Body of pancreas (tissue), 4 donors: ENCODE measurements at regions of chr12 and their contacts with region 1.

Region 1: GRCh38 chr12:127343940-127344339 is 923.0 kb upstream of the TMEM132C start:
- DNase-seq: no peak
- ATAC-seq: no peak
- H3K4me3 ChIP-seq: no peak overlapping the region
- H3K27ac ChIP-seq: no peak overlapping the region
- H3K4me1 ChIP-seq: no peaks in the 10 kb centered on the region
- H3K27me3 ChIP-seq: no peaks in the 10 kb centered on the region
- CTCF ChIP-seq: no peak
- POLR2A ChIP-seq: no peak

Region 2: DNA sequence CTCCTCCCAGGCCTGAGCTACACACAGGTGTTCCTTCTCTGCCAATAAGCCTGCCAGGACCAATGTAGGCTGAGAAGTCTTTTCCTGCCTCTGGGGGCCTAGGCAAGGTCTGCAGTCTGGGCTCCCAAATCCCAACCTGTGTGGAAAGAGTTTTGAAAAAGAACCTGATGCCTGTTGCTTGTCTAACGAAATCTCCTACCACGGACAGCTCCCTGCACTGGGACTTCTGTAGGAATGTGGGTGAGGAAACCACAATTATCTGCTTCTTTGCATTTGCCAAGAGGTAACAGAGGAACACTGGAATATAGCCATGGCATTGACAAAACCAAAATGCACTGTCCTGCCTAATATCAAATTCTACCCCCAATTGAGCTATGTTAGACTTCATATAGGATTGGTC is 46.0 kb after region 1 on chr12:
- intact Hi-C with region 1: loop called (anchors 10 kb)
- DNase-seq: no peak
- ATAC-seq: no peak
- H3K4me3 ChIP-seq: no peak overlapping the region
- H3K27ac ChIP-seq: no peak overlapping the region
- H3K4me1 ChIP-seq: no peaks in the 10 kb centered on the region
- H3K27me3 ChIP-seq: peaks cover 0 to 4% of the 10 kb centered on the region in 2 donors
- CTCF ChIP-seq: no peak
- POLR2A ChIP-seq: no peak